ENCODE measurements at regions of chr2 and their contacts with region 1.

Region 1: GRCh38 chr2:24971536-24972314 is at the start of gene DNAJC27:
- DNase-seq: peak; percentile 87
- H3K4me3 ChIP-seq: peak within 1 kb of the TSS; percentile 89
- CTCF ChIP-seq: no peak

Region 2: GRCh38 chr2:24691806-24692205 is 279.9 kb before region 1 on chr2:
- CTCF ChIA-PET with region 1: no interaction called
- POLR2A ChIA-PET with region 1: no interaction called
- DNase-seq: no peak
- H3K4me3 ChIP-seq: no peak overlapping the region
- CTCF ChIP-seq: no peak

Region 3: DNA sequence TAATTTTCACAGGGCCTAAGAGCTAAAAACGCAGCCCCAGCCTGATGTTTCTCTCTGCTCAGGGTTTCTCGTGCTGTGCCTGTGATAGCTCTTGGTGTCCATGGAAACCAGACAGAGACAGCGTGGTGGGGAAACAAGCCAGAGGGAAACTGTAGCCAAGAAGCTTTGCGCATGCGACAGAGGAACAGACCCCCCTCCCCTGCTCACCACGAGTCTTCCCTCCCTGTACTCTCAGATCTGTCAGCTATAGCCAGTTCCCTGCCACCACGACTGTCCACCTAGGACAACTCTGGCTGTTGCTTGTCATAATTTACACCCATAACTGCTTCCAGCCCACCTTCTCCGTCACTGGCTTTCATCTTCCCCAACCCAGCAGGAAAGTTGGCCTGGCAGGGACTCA is 13.2 kb after region 1 on chr2:
- CTCF ChIA-PET with region 1: interaction called, 49 read pairs
- POLR2A ChIA-PET with region 1: no interaction called
- DNase-seq: no peak
- H3K4me3 ChIP-seq: no peak overlapping the region
- CTCF ChIP-seq: no peak

Region 4: DNA sequence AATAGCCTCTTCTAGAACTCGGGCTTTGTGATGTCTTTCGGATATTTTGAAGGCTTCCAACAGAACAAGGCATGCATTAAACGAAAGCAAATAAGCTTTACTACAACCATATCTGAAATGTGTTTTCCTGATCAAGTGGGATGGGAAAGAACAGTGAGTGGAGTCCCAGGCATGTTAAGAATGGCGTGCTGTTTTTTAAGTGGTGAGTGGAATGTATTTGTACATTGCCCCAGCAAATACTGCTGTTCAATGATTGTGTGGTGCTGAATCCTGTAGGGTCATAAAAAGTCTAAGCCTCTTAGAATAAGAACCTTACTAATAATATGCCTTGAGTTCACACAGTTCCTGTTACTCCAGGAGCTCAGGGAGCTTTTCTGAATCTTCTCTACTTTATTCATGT is 144.2 kb after region 1 on chr2:
- CTCF ChIA-PET with region 1: interaction called, 650 read pairs
- POLR2A ChIA-PET with region 1: no interaction called
- DNase-seq: peak; percentile 49
- H3K4me3 ChIP-seq: no peak overlapping the region
- CTCF ChIP-seq: no peak

Region 5: GRCh38 chr2:25151718-25152117 is 180.0 kb after region 1 on chr2:
- CTCF ChIA-PET with region 1: interaction called, 13 read pairs
- POLR2A ChIA-PET with region 1: no interaction called
- DNase-seq: no peak
- H3K4me3 ChIP-seq: no peak overlapping the region
- CTCF ChIP-seq: no peak

Region 6: DNA sequence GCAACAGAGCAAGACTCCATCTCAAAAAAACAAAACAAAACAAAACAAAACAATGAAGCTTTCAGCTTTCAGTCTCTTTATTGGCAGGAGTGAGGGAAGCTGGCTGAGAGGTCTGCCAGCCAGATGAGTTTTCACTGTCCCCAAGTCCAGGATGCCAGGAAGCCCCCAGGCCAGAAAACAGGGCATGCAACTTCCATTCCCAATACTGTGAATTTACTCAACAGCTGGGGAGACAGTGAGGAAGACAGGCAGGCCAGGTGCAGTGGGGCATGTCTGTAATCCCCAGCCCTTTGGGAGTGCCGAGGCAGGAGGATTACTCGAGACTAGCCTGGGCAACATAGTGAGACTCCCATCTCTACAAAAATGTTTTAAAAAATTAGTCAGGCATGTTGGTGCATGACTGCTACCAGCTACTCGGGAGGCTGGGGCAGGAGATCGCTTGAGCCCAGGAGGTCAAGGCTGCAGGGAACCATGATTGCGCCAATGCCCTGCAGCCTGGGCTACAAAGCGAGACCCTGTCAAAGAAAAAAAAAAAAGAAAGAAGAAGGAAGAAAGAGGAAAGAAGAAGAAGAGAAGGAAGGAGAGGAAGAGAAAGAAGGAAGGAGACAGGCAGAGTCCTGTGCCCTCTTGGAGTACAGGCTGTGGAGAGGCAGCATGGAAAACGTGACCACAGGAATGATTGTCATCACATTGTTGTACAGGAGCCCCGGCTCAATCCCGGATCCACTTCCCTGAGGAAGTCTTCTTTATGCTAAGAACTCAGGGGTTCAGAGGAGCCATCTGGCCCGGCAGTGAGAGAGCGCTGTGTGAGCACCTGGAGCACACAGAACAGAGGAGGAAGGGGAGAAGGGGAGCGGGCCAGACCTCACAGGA is 225.8 kb after region 1 on chr2:
- CTCF ChIA-PET with region 1: interaction called, 120 read pairs
- POLR2A ChIA-PET with region 1: no interaction called
- DNase-seq: no peak
- H3K4me3 ChIP-seq: no peak overlapping the region
- CTCF ChIP-seq: no peak

Measured in AG04449 (cell line).